ENCODE measurements at regions of chr15 and their contacts with region 1.

Region 1: GRCh38 chr15:40440743-40441564 is at the start of gene BAHD1:
- DNase-seq: peak; percentile 92 to 98
- H3K4me3 ChIP-seq: peak within 1 kb of the TSS; percentile 73 to 97 (median 81)
- H3K27ac ChIP-seq: peak within 1 kb of the TSS; percentile 75
- H3K4me1 ChIP-seq: peaks cover 28 to 48% (median 38%) of the 10 kb centered on the region in 4 experiments
- H3K27me3 ChIP-seq: peaks cover 0 to 9% (median 0%) of the 10 kb centered on the region in 4 experiments; a peak in 4 of 7 replicates
- CTCF ChIP-seq: peak in 1 of 3 experiments; percentile 3; a peak in 1 of 4 replicates
- EP300 ChIP-seq: no peak
- POLR2A ChIP-seq: no peak
- RAD21 ChIP-seq: peak; percentile 2 to 16; a peak in 2 of 4 replicates
- total RNA-seq, gene BAHD1: 38.9 and 40.0 TPM in 2 replicates

Region 2: DNA sequence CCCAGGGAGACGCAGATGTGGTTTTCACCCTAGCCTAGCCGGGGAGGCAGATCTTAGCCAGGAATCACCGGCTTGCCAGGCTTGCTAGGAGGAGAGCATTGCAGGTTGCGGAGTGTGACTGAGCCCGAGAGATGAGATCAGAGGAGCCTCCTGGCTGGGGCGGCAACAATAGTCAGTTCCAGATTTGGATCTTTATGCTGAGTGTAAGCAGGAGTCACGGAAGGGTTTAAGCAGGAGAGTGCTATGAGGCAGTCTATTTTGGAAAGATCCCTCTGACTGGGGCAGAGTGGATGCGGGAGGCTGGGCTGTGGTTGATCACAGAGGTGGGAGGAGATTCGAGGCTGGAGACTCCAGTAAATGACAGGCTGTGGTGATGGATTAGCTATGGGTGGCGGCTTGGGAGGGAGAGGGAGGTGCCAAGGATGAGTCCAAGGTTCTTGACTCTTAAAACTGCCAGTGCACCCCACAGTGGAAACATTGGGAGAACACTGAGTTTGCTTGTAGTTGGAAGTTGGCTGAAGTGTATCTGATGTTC is 10.6 kb before region 1 on chr15:
- CTCF ChIA-PET with region 1: interaction called, 4 read pairs
- POLR2A ChIA-PET with region 1: interaction called, 23 read pairs
- DNase-seq: no peak
- H3K4me3 ChIP-seq: no peak overlapping the region
- H3K27ac ChIP-seq: no peak overlapping the region
- H3K4me1 ChIP-seq: peaks cover 4 to 16% (median 9%) of the 10 kb centered on the region in 4 experiments
- H3K27me3 ChIP-seq: peaks cover 0 to 26% (median 8%) of the 10 kb centered on the region in 4 experiments; a peak in 5 of 7 replicates
- CTCF ChIP-seq: no peak
- EP300 ChIP-seq: no peak
- POLR2A ChIP-seq: no peak
- RAD21 ChIP-seq: no peak

Region 3: GRCh38 chr15:40452296-40453090 is 11.5 kb after region 1 on chr15:
- CTCF ChIA-PET with region 1: interaction called, 8 read pairs
- POLR2A ChIA-PET with region 1: interaction called, 36 read pairs
- DNase-seq: no peak
- H3K4me3 ChIP-seq: no peak overlapping the region; a peak in 1 of 8 replicates
- H3K27ac ChIP-seq: no peak overlapping the region; the same call in 1 of the 2 replicates
- H3K4me1 ChIP-seq: peaks cover 4 to 41% (median 19%) of the 10 kb centered on the region in 4 experiments
- H3K27me3 ChIP-seq: no peaks in the 10 kb centered on the region
- CTCF ChIP-seq: no peak
- EP300 ChIP-seq: no peak
- POLR2A ChIP-seq: no peak
- RAD21 ChIP-seq: no peak

Region 4: GRCh38 chr15:40470423-40471104 is 29.6 kb after region 1 on chr15 and contains the start of gene CHST14:
- CTCF ChIA-PET with region 1: interaction called, 9 read pairs
- POLR2A ChIA-PET with region 1: interaction called, 21 read pairs
- DNase-seq: peak; percentile 27 to 72
- H3K4me3 ChIP-seq: peak within 1 kb of the TSS; percentile 68 to 87 (median 71)
- H3K27ac ChIP-seq: peak within 1 kb of the TSS; percentile 57; the same call in 1 of the 2 replicates
- H3K4me1 ChIP-seq: peaks cover 0 to 17% (median 10%) of the 10 kb centered on the region in 4 experiments; a peak in 6 of 7 replicates
- H3K27me3 ChIP-seq: peaks cover 0 to 3% (median 0%) of the 10 kb centered on the region in 4 experiments; a peak in 1 of 7 replicates
- CTCF ChIP-seq: no peak
- EP300 ChIP-seq: no peak
- POLR2A ChIP-seq: 0 out of 3 replicates have a peak, but pooled peaks of 1 of the 2 experiments have one; percentile 8
- RAD21 ChIP-seq: no peak
- total RNA-seq, gene CHST14: 17.7 and 20.3 TPM in 2 replicates

Region 5: GRCh38 chr15:40506964-40507571 is 66.1 kb after region 1 on chr15:
- CTCF ChIA-PET with region 1: interaction called, 24 read pairs
- POLR2A ChIA-PET with region 1: interaction called, 6 read pairs
- DNase-seq: peak in 1 of 2 experiments; percentile 87
- H3K4me3 ChIP-seq: peak overlapping the region in 3 of 4 experiments; percentile 14 to 55 (median 36); a peak in 5 of 8 replicates
- H3K27ac ChIP-seq: no peak overlapping the region
- H3K4me1 ChIP-seq: peaks cover 4 to 8% (median 6%) of the 10 kb centered on the region in 4 experiments; a peak in 6 of 7 replicates
- H3K27me3 ChIP-seq: peaks cover 0 to 25% (median 18%) of the 10 kb centered on the region in 4 experiments; a peak in 6 of 7 replicates
- CTCF ChIP-seq: peak; percentile 70 to 85 (median 77)
- EP300 ChIP-seq: no peak
- POLR2A ChIP-seq: no peak
- RAD21 ChIP-seq: peak; percentile 67 to 76